ENCODE measurements at regions of chr10 and their contacts with region 1.

Region 1: GRCh38 chr10:91298224-91298871 is 77.9 kb downstream of the PCGF5 start:
- DNase-seq: peak; percentile 91
- ATAC-seq: peak; percentile 98
- H3K4me3 Mint-ChIP-seq: peak overlapping the region; percentile 61
- H3K27ac Mint-ChIP-seq: peak overlapping the region; percentile 22
- H3K4me1 Mint-ChIP-seq: peaks cover 9% of the 10 kb centered on the region
- H3K27me3 Mint-ChIP-seq: no peaks in the 10 kb centered on the region

Region 2: DNA sequence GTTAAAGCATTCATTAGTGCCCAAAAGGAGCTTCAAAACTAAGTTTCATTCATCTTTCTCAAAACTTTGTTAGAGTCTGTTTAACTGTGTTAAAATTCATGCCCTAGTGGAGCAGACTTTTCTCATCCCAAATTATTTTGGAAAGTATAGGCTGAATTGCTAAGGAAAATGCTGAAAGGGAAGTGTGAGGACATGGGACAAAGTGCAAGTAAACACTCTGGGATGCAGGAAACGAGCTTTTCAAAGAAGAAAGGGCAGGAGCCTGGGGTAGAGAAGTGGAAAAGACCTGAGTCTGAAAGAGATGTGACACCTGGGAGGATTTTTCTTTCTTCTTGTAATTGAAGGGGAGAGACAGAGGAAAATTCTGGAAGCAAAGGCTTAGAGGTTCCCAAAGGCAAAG is 284.4 kb before region 1 on chr10:
- CTCF ChIA-PET with region 1: no interaction called
- POLR2A ChIA-PET with region 1: no interaction called
- intact Hi-C with region 1: no loop called
- DNase-seq: no peak
- ATAC-seq: no peak
- H3K4me3 Mint-ChIP-seq: no peak overlapping the region
- H3K27ac Mint-ChIP-seq: no peak overlapping the region
- H3K4me1 Mint-ChIP-seq: peaks cover 8% of the 10 kb centered on the region
- H3K27me3 Mint-ChIP-seq: peaks cover 8% of the 10 kb centered on the region

Region 3: DNA sequence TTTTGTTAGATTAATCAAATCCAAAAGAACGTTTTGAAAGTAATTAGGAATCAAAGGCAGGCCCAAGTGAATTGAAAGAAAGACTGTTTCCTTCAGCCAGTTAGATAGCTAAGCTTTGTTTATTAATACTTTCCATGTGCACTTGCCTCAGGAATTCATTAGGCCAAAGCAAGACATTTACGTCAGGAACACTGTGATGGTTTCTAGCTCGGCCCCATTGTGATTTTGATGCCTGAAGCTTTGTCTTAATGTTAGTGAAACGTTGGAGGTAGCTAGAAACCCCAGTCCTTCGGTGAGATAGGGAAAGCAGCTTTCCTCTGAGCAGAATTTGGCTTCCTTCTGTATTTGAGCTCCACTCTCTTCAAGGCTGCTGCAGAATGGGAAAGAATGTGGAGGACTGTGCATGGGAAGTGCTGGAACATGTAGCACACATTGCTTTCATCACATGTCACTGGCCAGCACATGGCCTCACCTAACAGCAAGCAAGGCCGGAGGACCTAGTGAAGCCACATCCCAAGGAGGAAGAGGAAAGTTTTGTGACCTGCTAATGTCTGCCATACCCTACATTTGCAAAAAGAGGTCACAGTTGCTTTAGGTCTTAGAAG is 13.8 kb before region 1 on chr10:
- CTCF ChIA-PET with region 1: interaction called, 17 read pairs
- POLR2A ChIA-PET with region 1: no interaction called
- intact Hi-C with region 1: no loop called
- DNase-seq: no peak
- ATAC-seq: no peak
- H3K4me3 Mint-ChIP-seq: no peak overlapping the region
- H3K27ac Mint-ChIP-seq: no peak overlapping the region
- H3K4me1 Mint-ChIP-seq: no peaks in the 10 kb centered on the region
- H3K27me3 Mint-ChIP-seq: no peaks in the 10 kb centered on the region

Region 4: DNA sequence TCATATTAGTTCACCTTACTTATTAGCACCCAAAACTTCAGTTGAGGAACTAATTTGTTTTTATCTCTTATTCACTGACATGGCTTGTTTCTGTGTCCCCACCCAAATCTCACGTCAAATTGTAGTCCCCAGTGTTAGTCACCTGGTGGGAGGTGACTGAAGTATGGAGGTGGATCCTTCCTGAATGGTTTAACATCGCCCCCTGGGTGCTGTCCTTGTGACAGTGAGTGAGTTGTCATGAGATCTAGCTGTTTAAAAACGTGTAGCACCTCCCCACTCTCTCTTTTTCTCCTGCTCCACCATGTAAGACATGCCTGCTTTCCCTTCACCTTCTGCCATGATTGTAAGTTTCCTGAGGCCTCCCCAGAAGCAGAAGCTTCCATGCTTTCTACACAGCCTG is 36.8 kb after region 1 on chr10:
- CTCF ChIA-PET with region 1: no interaction called
- POLR2A ChIA-PET with region 1: no interaction called
- intact Hi-C with region 1: loop called in 1 of 2 experiments (anchors 1 kb)
- DNase-seq: peak; percentile 44
- ATAC-seq: no peak
- H3K4me3 Mint-ChIP-seq: no peak overlapping the region
- H3K27ac Mint-ChIP-seq: no peak overlapping the region
- H3K4me1 Mint-ChIP-seq: peaks cover 3% of the 10 kb centered on the region
- H3K27me3 Mint-ChIP-seq: peaks cover 2% of the 10 kb centered on the region

Region 5: DNA sequence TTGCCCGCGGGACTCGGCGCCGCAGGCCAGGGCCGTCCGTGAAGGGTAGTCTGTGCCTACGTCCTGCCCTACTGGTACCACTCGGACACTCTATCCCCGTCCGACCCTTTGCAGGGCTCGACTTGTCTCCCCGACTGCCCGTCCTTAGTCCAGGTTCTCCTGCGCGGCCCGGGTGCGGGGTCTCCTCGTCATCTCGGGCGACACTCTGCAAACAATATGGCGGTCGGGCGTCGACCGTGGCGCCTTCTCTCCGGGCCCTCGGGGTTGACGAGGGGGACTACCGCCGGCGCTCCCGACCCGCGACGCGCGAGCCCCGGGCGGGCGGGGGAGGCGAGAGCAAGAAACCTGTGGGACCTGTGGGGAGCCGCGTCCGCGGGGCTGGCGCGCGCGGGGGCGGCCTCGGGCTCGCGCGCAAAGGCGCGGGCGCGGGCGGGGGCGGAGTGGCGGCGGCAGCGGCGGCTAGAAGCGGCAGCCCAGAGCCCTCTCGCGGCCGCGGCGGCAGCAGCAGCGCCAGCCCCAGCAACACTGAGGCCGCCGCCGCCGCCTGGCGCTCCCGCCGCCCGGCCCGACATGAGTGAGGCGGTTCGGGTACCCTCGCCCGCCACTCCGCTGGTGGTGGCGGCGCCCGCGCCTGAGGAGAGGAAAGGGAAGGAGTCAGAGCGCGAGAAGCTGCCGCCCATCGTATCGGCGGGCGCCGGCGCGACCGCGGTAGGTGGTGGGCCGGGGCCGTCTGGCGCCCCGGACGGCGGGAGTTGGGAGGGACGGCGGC is 111.7 kb after region 1 on chr10 and contains the start of gene HECTD2:
- CTCF ChIA-PET with region 1: interaction called, 5 read pairs
- POLR2A ChIA-PET with region 1: interaction called, 4 read pairs
- intact Hi-C with region 1: loop called (anchors 1 kb)
- DNase-seq: peak; percentile 90
- ATAC-seq: peak; percentile 80
- H3K4me3 Mint-ChIP-seq: peak within 1 kb of the TSS; percentile 86
- H3K27ac Mint-ChIP-seq: peak within 1 kb of the TSS; percentile 97
- H3K4me1 Mint-ChIP-seq: peaks cover 21% of the 10 kb centered on the region
- H3K27me3 Mint-ChIP-seq: peaks cover 4% of the 10 kb centered on the region
- total RNA-seq, gene HECTD2: 3.5 to 9.7 TPM

Region 6: GRCh38 chr10:91632671-91633550 is 334.6 kb after region 1 on chr10 and contains the start of gene PPP1R3C:
- CTCF ChIA-PET with region 1: interaction called, 127 read pairs
- POLR2A ChIA-PET with region 1: no interaction called
- intact Hi-C with region 1: loop called (anchors 1 kb)
- DNase-seq: peak; percentile 83
- ATAC-seq: peak; percentile 95
- H3K4me3 Mint-ChIP-seq: peak within 1 kb of the TSS; percentile 65
- H3K27ac Mint-ChIP-seq: no peak within 1 kb of the TSS
- H3K4me1 Mint-ChIP-seq: peaks cover 8% of the 10 kb centered on the region
- H3K27me3 Mint-ChIP-seq: peaks cover 59% of the 10 kb centered on the region
- total RNA-seq, gene PPP1R3C: 0.63 to 0.71 TPM

Measured in activated CD4-positive, alpha-beta T cell treated with anti-CD3 and anti-CD28 coated beads for 36 hours (primary cell).